ENCODE measurements at regions of chr17 and their contacts with region 1.

Region 1: DNA sequence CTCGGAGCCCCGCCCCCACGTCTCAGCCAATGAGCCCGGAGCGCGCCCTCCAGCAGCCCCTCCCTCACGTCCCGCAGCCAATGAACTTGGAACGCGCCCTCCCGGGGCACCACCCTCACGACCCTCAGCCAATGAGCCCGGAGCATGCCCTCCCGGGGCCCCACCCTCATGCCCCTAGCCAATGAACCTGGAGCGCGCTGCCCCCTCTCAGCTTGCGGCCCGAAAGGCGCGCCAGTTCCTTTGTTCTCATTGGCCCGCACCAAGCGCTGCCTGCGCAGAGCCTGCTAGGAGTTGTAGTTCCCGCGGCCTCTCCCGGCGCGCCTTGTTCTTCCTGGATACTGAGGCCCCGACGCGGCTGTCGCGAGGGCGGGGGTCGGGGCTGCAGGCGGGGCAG is at the start of gene LRRC45:
- DNase-seq: peak; percentile 99
- ATAC-seq: peak; percentile 94
- H3K4me3 ChIP-seq: peak within 1 kb of the TSS; percentile 62 to 88 (median 79)
- H3K4me3 Mint-ChIP-seq: peak within 1 kb of the TSS; percentile 83
- H3K27ac ChIP-seq: peak within 1 kb of the TSS in 1 of 2 donors; percentile 57
- H3K27ac Mint-ChIP-seq: peak within 1 kb of the TSS; percentile 67
- H3K4me1 ChIP-seq: peaks cover 14 to 33% of the 10 kb centered on the region in 2 donors
- H3K4me1 Mint-ChIP-seq: peaks cover 15% of the 10 kb centered on the region
- H3K27me3 ChIP-seq: peaks cover 0 to 10% (median 0%) of the 10 kb centered on the region in 4 experiments
- H3K27me3 Mint-ChIP-seq: no peaks in the 10 kb centered on the region
- CTCF ChIP-seq: no peak
- total RNA-seq, gene LRRC45: 16.3 and 19.4 TPM in 2 replicates

Region 2: DNA sequence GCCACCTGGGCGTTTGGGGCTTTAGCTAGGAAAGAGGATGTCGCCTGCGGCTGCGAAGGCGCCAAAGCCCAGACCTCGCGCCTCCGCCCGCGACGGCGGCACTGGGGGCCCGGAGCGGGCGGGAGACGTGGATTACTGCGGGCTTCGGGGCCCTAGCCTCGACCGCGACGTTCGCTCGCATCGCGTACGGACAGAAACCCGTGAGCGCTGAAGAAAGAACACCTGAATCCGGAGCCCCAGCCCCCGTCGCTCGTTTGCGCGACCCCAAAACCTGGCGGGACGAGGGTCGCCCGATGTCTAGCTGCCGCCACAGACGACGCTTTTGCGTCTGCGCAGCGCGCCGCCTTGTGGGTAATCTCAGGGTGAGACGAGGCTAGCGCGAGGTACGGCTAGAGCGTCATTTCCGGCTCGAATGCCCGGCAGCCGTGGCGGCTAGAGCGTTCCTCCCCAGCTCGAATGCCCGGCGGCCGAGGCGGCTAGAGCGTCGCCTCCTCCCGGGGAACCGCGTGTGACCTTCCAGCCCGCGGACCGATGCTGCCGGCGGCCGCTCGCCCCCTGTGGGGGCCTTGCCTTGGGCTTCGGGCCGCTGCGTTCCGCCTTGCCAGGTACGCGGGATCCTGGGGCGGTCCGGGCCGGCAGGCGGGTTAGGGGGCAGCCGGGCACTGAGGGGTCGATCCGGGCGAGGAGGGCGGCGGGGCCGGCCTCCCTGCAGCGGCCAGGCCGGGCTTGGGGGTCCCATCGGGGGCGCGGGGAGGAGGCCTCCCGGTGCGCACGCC is 319.8 kb before region 1 on chr17 and contains the start of gene MRPL12:
- CTCF ChIA-PET with region 1: no interaction called
- POLR2A ChIA-PET with region 1: interaction called, 11 read pairs
- intact Hi-C with region 1: no loop called
- DNase-seq: peak; percentile 94
- ATAC-seq: peak; percentile 95
- H3K4me3 ChIP-seq: peak within 1 kb of the TSS; percentile 45 to 98 (median 68)
- H3K4me3 Mint-ChIP-seq: peak within 1 kb of the TSS; percentile 90
- H3K27ac ChIP-seq: peak within 1 kb of the TSS; percentile 57 to 97
- H3K27ac Mint-ChIP-seq: peak within 1 kb of the TSS; percentile 91
- H3K4me1 ChIP-seq: peaks cover 24 to 32% of the 10 kb centered on the region in 2 donors
- H3K4me1 Mint-ChIP-seq: peaks cover 33% of the 10 kb centered on the region
- H3K27me3 ChIP-seq: no peaks in the 10 kb centered on the region
- H3K27me3 Mint-ChIP-seq: no peaks in the 10 kb centered on the region
- CTCF ChIP-seq: peak; percentile 36
- total RNA-seq, gene MRPL12: 23.8 and 24.1 TPM in 2 replicates

Region 3: DNA sequence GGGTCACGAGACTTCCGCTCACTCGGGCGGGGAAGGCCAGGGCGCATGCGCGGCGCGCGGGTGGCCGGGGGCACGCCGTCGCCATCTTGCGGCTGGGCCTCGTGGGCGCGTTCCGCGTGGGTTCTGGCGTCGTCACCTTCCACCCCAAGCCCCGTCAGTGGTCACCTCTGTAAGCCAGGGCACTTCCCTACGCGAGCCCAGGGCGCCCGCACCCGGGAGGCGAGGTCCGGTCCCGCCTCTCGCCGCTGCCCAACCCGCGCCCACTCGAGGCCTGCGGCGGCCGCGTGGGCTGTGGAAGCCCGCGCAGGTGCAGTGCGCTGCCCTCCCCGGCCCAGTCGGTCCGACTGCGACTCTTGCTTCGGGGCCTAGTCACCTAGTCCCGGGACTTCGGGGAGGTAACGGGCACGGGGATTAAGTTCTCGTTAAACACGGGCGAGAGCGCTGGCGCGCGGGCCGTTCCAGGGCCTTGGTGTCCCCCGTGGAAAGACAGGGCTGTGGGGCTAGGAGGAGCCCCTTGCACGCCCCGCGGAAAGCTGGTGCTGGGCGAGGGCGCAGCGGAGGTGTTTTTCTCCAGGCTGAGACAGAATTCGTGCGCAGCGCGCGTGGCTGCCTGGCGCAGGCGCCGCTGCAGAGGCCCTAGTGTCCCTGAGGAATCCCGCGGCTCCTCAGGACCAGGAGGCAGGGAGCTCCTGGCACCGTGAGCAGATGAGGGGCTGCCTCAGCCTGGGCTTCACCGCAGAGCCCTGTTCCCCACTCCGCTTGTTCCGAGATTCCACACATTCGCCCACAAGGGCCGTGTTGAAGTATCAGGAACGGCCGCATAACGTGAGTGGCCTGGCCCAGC is 151.4 kb before region 1 on chr17:
- CTCF ChIA-PET with region 1: interaction called, 4 read pairs
- POLR2A ChIA-PET with region 1: no interaction called
- intact Hi-C with region 1: loop called (anchors 1 kb)
- DNase-seq: peak; percentile 96
- ATAC-seq: peak; percentile 2
- H3K4me3 ChIP-seq: peak overlapping the region; percentile 27 to 90 (median 84)
- H3K4me3 Mint-ChIP-seq: peak overlapping the region; percentile 89
- H3K27ac ChIP-seq: peak overlapping the region; percentile 90 to 99
- H3K27ac Mint-ChIP-seq: peak overlapping the region; percentile 98
- H3K4me1 ChIP-seq: peaks cover 22 to 39% of the 10 kb centered on the region in 2 donors
- H3K4me1 Mint-ChIP-seq: peaks cover 32% of the 10 kb centered on the region
- H3K27me3 ChIP-seq: no peaks in the 10 kb centered on the region
- H3K27me3 Mint-ChIP-seq: no peaks in the 10 kb centered on the region
- CTCF ChIP-seq: peak; percentile 50

Region 4: GRCh38 chr17:81917565-81918332 is 105.2 kb before region 1 on chr17 and contains the start of gene SIRT7:
- CTCF ChIA-PET with region 1: no interaction called
- POLR2A ChIA-PET with region 1: no interaction called
- intact Hi-C with region 1: loop called (anchors 2 kb)
- DNase-seq: peak; percentile 92
- ATAC-seq: peak; percentile 90
- H3K4me3 ChIP-seq: peak within 1 kb of the TSS; percentile 53 to 75 (median 69)
- H3K4me3 Mint-ChIP-seq: peak within 1 kb of the TSS; percentile 91
- H3K27ac ChIP-seq: peak within 1 kb of the TSS; percentile 44 to 61
- H3K27ac Mint-ChIP-seq: peak within 1 kb of the TSS; percentile 90
- H3K4me1 ChIP-seq: peaks cover 13 to 22% of the 10 kb centered on the region in 2 donors
- H3K4me1 Mint-ChIP-seq: peaks cover 28% of the 10 kb centered on the region
- H3K27me3 ChIP-seq: no peaks in the 10 kb centered on the region
- H3K27me3 Mint-ChIP-seq: no peaks in the 10 kb centered on the region
- CTCF ChIP-seq: no peak
- total RNA-seq, gene SIRT7: 82.7 and 83.2 TPM in 2 replicates

Region 5: GRCh38 chr17:81977211-81978027 is 45.6 kb before region 1 on chr17 and contains the start of gene ASPSCR1:
- CTCF ChIA-PET with region 1: interaction called, 3 read pairs
- POLR2A ChIA-PET with region 1: interaction called, 4 read pairs
- intact Hi-C with region 1: loop called (anchors 1 kb)
- DNase-seq: peak; percentile 96
- ATAC-seq: peak; percentile 92
- H3K4me3 ChIP-seq: peak within 1 kb of the TSS; percentile 38 to 96 (median 79)
- H3K4me3 Mint-ChIP-seq: peak within 1 kb of the TSS; percentile 98
- H3K27ac ChIP-seq: peak within 1 kb of the TSS; percentile 63 to 91
- H3K27ac Mint-ChIP-seq: peak within 1 kb of the TSS; percentile 99
- H3K4me1 ChIP-seq: peaks cover 19 to 26% of the 10 kb centered on the region in 2 donors
- H3K4me1 Mint-ChIP-seq: peaks cover 29% of the 10 kb centered on the region
- H3K27me3 ChIP-seq: no peaks in the 10 kb centered on the region
- H3K27me3 Mint-ChIP-seq: peaks cover 3% of the 10 kb centered on the region
- CTCF ChIP-seq: no peak
- total RNA-seq, gene ASPSCR1: 46.7 and 50.4 TPM in 2 replicates

Region 6: DNA sequence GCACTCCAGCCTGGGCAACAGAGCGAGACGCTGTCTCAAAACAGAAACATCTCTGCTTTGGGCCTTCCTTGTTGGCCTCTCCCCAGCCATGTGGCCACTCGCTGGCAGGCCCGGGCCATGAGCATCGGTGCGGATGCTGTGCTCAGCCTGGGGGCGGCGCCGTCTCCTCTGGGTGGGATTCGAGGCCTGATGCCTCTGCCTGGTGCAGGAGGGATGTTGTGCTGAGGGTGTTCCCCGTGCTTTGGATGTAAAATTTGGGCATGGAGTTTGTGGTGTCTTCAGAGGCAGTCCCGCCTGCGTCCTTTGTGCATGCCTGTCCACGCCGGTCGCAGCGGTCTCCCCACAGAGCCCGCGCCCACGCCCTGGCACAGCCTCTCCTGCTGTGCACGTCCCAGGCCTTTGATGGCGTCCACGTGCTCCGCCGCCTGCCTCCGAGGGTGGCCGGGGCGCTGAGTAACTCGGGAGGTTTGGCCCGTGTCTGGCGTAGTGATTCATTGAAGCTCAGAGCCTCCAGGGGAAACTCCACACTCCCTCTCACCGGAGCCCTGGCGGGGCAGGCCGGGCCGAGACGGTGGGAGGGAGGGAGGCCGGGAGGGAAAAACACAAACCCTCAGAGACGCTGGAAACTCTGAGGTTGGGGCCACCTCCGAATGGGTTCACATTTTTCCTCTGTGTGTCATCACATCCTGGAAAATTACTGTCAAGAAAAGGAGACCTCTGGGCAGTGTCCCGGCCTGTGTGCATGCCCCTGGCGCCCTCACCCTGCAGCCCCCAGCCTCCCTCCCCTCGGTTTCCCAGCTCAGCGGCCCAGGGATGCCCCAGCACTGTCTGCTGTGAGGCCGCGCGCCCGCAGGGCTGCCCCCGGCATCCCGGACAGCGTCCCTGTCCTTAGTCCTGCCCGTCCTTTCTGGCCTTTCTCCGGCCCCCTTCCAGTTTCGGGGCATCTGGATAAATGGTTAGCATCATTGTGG is 19.3 kb before region 1 on chr17:
- CTCF ChIA-PET with region 1: no interaction called
- POLR2A ChIA-PET with region 1: no interaction called
- intact Hi-C with region 1: no loop called
- DNase-seq: no peak
- ATAC-seq: no peak
- H3K4me3 ChIP-seq: no peak overlapping the region
- H3K4me3 Mint-ChIP-seq: no peak overlapping the region
- H3K27ac ChIP-seq: no peak overlapping the region
- H3K27ac Mint-ChIP-seq: no peak overlapping the region
- H3K4me1 ChIP-seq: no peaks in the 10 kb centered on the region
- H3K4me1 Mint-ChIP-seq: no peaks in the 10 kb centered on the region
- H3K27me3 ChIP-seq: no peaks in the 10 kb centered on the region
- H3K27me3 Mint-ChIP-seq: no peaks in the 10 kb centered on the region
- CTCF ChIP-seq: no peak

Region 7: GRCh38 chr17:82051776-82052637 is 29.0 kb after region 1 on chr17 and contains the starts of genes GPS1 and RFNG:
- CTCF ChIA-PET with region 1: interaction called, 3 read pairs
- POLR2A ChIA-PET with region 1: no interaction called
- intact Hi-C with region 1: loop called (anchors 2 kb)
- DNase-seq: peak; percentile 82
- ATAC-seq: peak; percentile 88
- H3K4me3 ChIP-seq: peak within 1 kb of the TSS; percentile 54 to 88 (median 63)
- H3K4me3 Mint-ChIP-seq: peak within 1 kb of the TSS; percentile 84
- H3K27ac ChIP-seq: peak within 1 kb of the TSS in 1 of 2 donors; percentile 30
- H3K27ac Mint-ChIP-seq: peak within 1 kb of the TSS; percentile 86
- H3K4me1 ChIP-seq: peaks cover 20 to 34% of the 10 kb centered on the region in 2 donors
- H3K4me1 Mint-ChIP-seq: peaks cover 14% of the 10 kb centered on the region
- H3K27me3 ChIP-seq: no peaks in the 10 kb centered on the region
- H3K27me3 Mint-ChIP-seq: no peaks in the 10 kb centered on the region
- CTCF ChIP-seq: no peak
- total RNA-seq, gene GPS1: 79.5 and 80.5 TPM in 2 replicates
- total RNA-seq, gene RFNG: 30.1 TPM in 2 replicates

Measured in B cell (primary cell).